Esophagus muscularis mucosa (tissue), 4 donors: ENCODE measurements at regions of chr3 and their contacts with region 1.

Region 1: GRCh38 chr3:152444029-152444641 is 175.4 kb downstream of the MBNL1 start:
- DNase-seq: no peak
- H3K4me3 ChIP-seq: peak overlapping the region in 2 of 4 donors; percentile 3 to 6
- H3K27ac ChIP-seq: peak overlapping the region; percentile 40 to 57 (median 48)
- H3K4me1 ChIP-seq: peaks cover 38 to 82% (median 79%) of the 10 kb centered on the region in 4 donors
- H3K27me3 ChIP-seq: no peaks in the 10 kb centered on the region
- CTCF ChIP-seq: peak; percentile 75 to 78 (median 77)
- EP300 ChIP-seq: no peak
- POLR2A ChIP-seq: no peak

Region 2: DNA sequence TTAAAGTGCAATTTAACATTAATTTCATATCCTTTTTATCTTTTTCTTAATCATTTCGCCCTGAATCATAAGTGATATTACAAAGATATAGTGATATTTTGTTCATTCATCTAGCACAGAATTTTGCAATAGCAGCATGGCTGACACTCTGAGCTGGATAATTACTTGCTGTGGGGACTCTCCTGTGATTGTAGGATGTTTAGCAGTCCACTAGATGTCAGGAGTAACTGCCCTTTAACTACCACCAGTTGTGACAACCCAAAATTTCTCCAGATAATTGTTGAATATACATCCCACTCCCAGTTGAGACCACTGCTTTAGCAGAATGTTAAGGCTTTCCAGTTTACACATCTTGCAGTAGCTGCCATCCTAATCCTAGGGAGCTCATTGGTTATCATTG is 372.2 kb before region 1 on chr3:
- intact Hi-C with region 1: loop called (anchors 5 kb)
- DNase-seq: no peak
- H3K4me3 ChIP-seq: no peak overlapping the region
- H3K27ac ChIP-seq: no peak overlapping the region
- H3K4me1 ChIP-seq: peaks cover 4 to 22% (median 17%) of the 10 kb centered on the region in 4 donors
- H3K27me3 ChIP-seq: no peaks in the 10 kb centered on the region
- CTCF ChIP-seq: peak; percentile 26 to 48 (median 32)
- EP300 ChIP-seq: no peak
- POLR2A ChIP-seq: no peak

Region 3: GRCh38 chr3:152183473-152183872 is 260.7 kb before region 1 on chr3:
- intact Hi-C with region 1: loop called (anchors 5 kb)
- DNase-seq: no peak
- H3K4me3 ChIP-seq: no peak overlapping the region
- H3K27ac ChIP-seq: no peak overlapping the region
- H3K4me1 ChIP-seq: peaks cover 0 to 16% (median 15%) of the 10 kb centered on the region in 4 donors
- H3K27me3 ChIP-seq: no peaks in the 10 kb centered on the region
- CTCF ChIP-seq: peak; percentile 18 to 38 (median 35)
- EP300 ChIP-seq: no peak
- POLR2A ChIP-seq: no peak

Region 4: GRCh38 chr3:152281133-152281713 is 162.9 kb before region 1 on chr3:
- intact Hi-C with region 1: loop called (anchors 5 kb)
- DNase-seq: no peak
- H3K4me3 ChIP-seq: no peak overlapping the region
- H3K27ac ChIP-seq: peak overlapping the region; percentile 24 to 98 (median 66)
- H3K4me1 ChIP-seq: peaks cover 85 to 96% (median 93%) of the 10 kb centered on the region in 4 donors
- H3K27me3 ChIP-seq: no peaks in the 10 kb centered on the region
- CTCF ChIP-seq: no peak
- EP300 ChIP-seq: no peak
- POLR2A ChIP-seq: no peak

Region 5: GRCh38 chr3:152309535-152310307 is 134.4 kb before region 1 on chr3:
- intact Hi-C with region 1: no loop called
- DNase-seq: no peak
- H3K4me3 ChIP-seq: peak overlapping the region in 3 of 4 donors; percentile 14 to 24 (median 19)
- H3K27ac ChIP-seq: peak overlapping the region; percentile 62 to 84 (median 84)
- H3K4me1 ChIP-seq: peaks cover 59 to 82% (median 79%) of the 10 kb centered on the region in 4 donors
- H3K27me3 ChIP-seq: no peaks in the 10 kb centered on the region
- CTCF ChIP-seq: no peak
- EP300 ChIP-seq: no peak
- POLR2A ChIP-seq: no peak